ENCODE measurements at regions of chr17 and their contacts with region 1.

Region 1: DNA sequence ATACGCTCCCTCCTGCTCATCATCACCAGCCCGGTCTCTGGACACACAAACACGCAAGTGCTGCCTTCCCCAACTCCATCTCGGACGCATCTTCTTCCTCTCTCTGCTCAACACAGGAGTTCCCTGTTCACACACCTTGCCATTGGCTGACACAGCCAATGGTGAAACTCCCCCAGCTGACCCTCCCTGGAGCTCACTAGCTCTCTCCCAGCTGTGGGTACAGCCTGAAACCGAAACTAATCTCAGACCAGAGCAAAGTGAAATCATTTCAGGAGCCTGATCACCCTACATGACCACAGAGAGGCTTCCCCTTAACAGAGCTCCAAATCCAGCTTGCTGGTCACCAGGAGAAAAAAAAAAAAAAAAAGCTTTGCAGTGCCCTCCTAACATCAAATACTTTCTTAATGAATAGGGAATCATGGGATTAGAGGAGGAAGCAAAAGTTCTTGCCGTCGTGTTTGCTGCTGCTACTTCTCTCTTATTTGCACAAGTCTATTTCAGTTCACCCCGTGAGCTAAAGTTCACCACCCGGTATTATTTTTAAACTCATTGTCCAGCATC is 8.3 kb downstream of the CUEDC1 start:
- DNase-seq: peak in 1 of 2 experiments; percentile 43
- H3K4me3 ChIP-seq: no peak overlapping the region
- H3K4me1 ChIP-seq: peaks cover 58% of the 10 kb centered on the region
- H3K27me3 ChIP-seq: no peaks in the 10 kb centered on the region

Region 2: DNA sequence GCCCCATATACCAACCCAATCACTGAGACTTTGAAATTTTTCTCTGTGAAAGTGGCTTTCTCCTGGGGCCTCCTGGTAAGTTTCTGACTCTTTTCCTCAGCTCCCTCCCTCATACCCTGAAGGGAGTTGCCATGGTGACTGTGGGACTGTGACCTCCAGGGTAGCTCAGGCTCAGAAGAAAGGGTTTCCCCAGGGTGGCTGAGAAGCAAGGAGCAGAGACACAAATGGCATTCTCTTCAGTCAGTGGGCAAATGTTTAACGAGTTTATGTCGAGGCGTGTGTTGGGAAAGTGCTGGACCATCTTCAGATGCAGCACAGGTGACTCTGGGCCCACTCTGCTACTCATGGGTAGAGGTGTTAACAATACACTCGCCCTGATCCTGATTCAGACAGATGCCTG is 143.9 kb before region 1 on chr17:
- in situ Hi-C with region 1: no loop called
- DNase-seq: peak; percentile 6 to 55
- H3K4me3 ChIP-seq: no peak overlapping the region
- H3K4me1 ChIP-seq: peaks cover 6% of the 10 kb centered on the region; the same call in 1 of the 2 replicates
- H3K27me3 ChIP-seq: peaks cover under 1% of the 10 kb centered on the region; the same call in 1 of the 2 replicates

Region 3: DNA sequence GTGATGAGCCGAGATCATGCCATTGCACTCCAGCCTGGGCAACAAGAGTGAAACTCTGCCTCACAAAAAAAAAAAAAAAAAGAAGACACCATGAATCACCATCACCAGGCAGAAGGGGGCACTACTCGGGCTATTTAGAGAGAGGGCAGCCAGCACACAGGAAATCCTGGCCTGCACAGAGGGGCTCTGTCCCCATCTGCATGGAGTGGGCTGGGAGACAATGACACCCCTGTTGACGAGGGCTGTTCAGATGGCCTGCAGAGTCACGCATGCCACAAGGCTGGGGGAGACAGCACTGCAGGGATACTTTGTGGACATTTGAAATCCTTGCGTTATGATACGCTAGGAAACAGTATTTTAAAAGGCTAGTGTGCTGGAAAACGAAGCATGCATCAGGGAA is 40.0 kb before region 1 on chr17:
- in situ Hi-C with region 1: loop called (anchors 5 kb)
- DNase-seq: peak in 1 of 2 experiments; percentile 29
- H3K4me3 ChIP-seq: no peak overlapping the region
- H3K4me1 ChIP-seq: peaks cover 8% of the 10 kb centered on the region
- H3K27me3 ChIP-seq: no peaks in the 10 kb centered on the region

Measured in HAP-1 (cell line).